ENCODE measurements at regions of chr1 and their contacts with region 1.

Region 1: DNA sequence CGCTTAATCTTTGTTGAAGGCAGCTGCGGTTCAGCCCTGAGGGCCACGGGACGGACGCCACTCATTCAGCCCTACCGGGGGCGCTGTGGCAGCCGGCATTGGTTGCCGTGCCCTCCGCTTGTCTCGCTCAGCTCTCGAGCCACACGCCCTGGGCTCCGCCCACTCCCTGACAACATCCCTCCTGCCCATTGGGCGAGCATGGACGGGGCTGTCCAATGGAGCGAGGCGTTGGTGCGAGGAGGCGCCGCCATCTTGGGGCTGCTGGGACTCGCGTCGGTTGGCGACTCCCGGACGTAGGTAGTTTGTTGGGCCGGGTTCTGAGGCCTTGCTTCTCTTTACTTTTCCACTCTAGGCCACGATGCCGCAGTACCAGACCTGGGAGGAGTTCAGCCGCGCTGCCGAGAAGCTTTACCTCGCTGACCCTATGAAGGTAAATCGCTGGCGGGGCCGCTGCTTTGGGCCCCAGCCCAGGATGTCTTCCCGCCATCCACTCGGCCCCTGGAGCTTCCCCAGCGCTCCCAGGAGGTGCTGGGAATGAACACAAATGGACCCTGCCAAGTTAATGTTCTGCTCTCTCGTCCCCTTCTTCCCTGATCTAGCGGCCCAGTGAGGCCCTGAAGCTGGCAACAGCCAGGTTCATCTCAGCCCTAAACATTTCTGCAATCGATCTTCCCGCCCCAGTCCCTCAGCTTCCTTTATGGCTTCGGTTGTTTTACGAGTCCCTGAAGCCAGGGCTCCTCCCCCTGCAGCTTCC is at the start of gene SRP9:
- DNase-seq: peak; percentile 99
- H3K4me3 ChIP-seq: peak within 1 kb of the TSS; percentile 68 to 94
- H3K4me3 Mint-ChIP-seq: no peak within 1 kb of the TSS
- H3K27ac ChIP-seq: peak within 1 kb of the TSS; percentile 94
- H3K27ac Mint-ChIP-seq: no peak within 1 kb of the TSS
- H3K4me1 ChIP-seq: peaks cover 57% of the 10 kb centered on the region
- H3K4me1 Mint-ChIP-seq: peaks cover 0 to 32% (median 27%) of the 10 kb centered on the region in 4 donors
- H3K27me3 ChIP-seq: no peaks in the 10 kb centered on the region
- H3K27me3 Mint-ChIP-seq: no peaks in the 10 kb centered on the region
- total RNA-seq, gene SRP9: 141 to 151 TPM

Region 2: DNA sequence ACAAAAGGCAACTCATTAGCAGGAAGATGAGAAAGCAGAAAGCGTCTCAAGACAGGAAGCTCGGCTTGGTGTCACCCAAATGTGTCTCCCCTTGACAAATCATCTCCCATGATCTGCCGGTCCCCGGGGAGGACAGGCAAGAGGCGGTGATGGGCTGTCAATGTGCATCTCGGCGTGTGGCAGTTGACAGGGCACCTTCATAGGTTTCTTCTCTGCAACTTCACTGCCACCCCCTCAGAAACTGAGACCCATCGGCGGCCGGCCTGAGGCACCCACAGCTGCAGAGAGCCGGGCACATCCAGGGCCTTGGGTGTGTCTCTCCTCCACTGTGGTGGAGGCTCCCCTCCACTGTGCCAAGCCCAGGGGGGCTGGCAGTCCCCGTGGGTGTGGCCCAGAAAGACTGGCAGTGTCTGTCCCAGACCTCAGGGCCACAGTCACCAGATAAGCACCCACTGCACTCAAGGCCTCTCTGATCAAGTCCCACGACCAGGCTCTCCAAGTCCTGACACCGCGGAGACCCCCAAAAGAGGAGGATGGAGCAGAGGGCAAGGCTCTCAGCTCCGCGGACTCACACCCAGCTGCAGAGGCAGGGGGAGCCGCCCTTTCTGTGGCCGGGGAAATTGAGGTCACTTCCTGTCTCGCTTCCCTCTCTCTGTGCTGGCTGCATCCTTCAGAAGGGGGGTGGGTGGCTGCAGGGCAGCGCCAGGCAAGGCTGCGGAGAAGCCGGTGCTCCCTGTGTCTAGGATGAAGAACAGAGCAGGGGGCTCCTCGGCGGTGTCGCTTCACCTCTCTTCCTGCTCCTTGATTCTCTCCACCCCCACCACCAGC is 310.4 kb before region 1 on chr1:
- CTCF ChIA-PET with region 1: interaction called, 5 read pairs
- POLR2A ChIA-PET with region 1: interaction called, 24 read pairs
- intact Hi-C with region 1: no loop called
- DNase-seq: peak; percentile 83 to 89 (median 85)
- H3K4me3 ChIP-seq: peak overlapping the region; percentile 74 to 85
- H3K4me3 Mint-ChIP-seq: peak overlapping the region; percentile 90 to 94 (median 92)
- H3K27ac ChIP-seq: peak overlapping the region; percentile 84
- H3K27ac Mint-ChIP-seq: peak overlapping the region; percentile 92 to 98 (median 97)
- H3K4me1 ChIP-seq: peaks cover 48% of the 10 kb centered on the region
- H3K4me1 Mint-ChIP-seq: peaks cover 27 to 63% (median 45%) of the 10 kb centered on the region in 4 donors
- H3K27me3 ChIP-seq: no peaks in the 10 kb centered on the region
- H3K27me3 Mint-ChIP-seq: no peaks in the 10 kb centered on the region

Region 3: DNA sequence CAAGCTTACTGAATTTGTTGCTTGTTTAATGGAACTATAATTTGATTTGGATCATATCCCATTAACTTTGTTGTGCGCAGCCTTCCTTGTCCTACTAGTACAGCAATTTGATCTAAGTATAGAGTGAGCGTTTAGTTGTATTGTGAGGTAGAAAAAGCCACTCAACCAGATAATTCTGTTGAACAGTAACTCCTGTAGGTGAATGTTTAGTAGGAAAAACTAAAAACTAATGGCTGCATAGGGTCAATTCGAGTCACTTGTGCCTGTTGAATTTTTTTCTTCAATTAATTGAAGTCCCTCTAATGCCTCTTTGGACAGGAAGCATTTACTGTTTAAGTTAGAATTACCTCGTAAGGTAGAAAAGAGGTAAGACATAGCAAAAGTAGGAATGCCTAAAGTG is 17.2 kb after region 1 on chr1:
- CTCF ChIA-PET with region 1: interaction called, 3 read pairs
- POLR2A ChIA-PET with region 1: interaction called, 28 read pairs
- intact Hi-C with region 1: no loop called
- DNase-seq: no peak
- H3K4me3 ChIP-seq: no peak overlapping the region
- H3K4me3 Mint-ChIP-seq: no peak overlapping the region
- H3K27ac ChIP-seq: no peak overlapping the region
- H3K27ac Mint-ChIP-seq: no peak overlapping the region
- H3K4me1 ChIP-seq: no peaks in the 10 kb centered on the region
- H3K4me1 Mint-ChIP-seq: peaks cover 0 to 7% (median 2%) of the 10 kb centered on the region in 4 donors
- H3K27me3 ChIP-seq: no peaks in the 10 kb centered on the region
- H3K27me3 Mint-ChIP-seq: no peaks in the 10 kb centered on the region

Region 4: DNA sequence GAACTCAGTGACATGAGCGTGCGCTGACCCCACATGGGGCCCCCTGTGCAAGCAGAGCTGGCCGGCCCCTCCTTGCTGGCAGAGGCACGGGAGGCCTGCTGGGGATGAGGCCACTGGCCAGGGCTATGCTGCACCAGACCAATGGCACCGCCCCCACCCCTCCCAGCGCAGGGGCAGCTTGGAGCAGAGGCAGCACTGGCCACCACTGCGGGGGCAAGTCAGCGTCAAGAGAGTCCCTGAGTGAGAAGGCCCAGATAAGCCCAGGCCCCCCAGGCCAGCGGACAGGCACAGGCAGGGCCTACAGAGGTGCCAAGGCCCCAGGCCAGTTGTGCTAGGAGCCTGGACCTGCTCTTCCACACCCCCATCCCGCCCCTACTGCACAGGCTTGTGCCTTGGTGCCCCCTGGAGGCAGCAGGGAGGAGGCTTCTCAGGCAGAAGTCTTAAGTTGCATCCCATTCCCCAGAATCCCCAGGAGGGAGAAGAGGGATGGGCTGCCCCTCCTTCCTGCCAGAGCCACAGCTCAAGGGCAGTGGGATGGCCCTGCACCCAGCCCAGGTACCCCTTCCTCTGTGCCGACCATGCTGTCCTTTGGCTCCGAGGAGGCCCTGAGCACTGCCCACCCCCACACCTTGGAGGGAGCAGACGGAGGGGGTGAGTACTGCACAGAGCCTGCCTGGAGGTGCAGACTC is 68.0 kb after region 1 on chr1:
- CTCF ChIA-PET with region 1: interaction called, 5 read pairs
- POLR2A ChIA-PET with region 1: interaction called, 17 read pairs
- intact Hi-C with region 1: loop called (anchors 5 kb)
- DNase-seq: peak in 3 of 5 donors; percentile 33 to 40 (median 33)
- H3K4me3 ChIP-seq: no peak overlapping the region
- H3K4me3 Mint-ChIP-seq: peak overlapping the region in 1 of 8 donors; percentile 36
- H3K27ac ChIP-seq: no peak overlapping the region
- H3K27ac Mint-ChIP-seq: no peak overlapping the region
- H3K4me1 ChIP-seq: peaks cover 41% of the 10 kb centered on the region
- H3K4me1 Mint-ChIP-seq: peaks cover 25 to 57% (median 38%) of the 10 kb centered on the region in 4 donors
- H3K27me3 ChIP-seq: no peaks in the 10 kb centered on the region
- H3K27me3 Mint-ChIP-seq: no peaks in the 10 kb centered on the region

Region 5: GRCh38 chr1:225881969-225882693 is 104.4 kb after region 1 on chr1 and contains the start of gene TMEM63A:
- CTCF ChIA-PET with region 1: interaction called, 19 read pairs
- POLR2A ChIA-PET with region 1: interaction called, 78 read pairs
- intact Hi-C with region 1: loop called (anchors 1 kb)
- DNase-seq: peak; percentile 86 to 92 (median 88)
- H3K4me3 ChIP-seq: peak within 1 kb of the TSS; percentile 89 to 98
- H3K4me3 Mint-ChIP-seq: peak within 1 kb of the TSS; percentile 95 to 99 (median 98)
- H3K27ac ChIP-seq: peak within 1 kb of the TSS; percentile 84
- H3K27ac Mint-ChIP-seq: peak within 1 kb of the TSS; percentile 93 to 97 (median 96)
- H3K4me1 ChIP-seq: peaks cover 48% of the 10 kb centered on the region
- H3K4me1 Mint-ChIP-seq: peaks cover 37 to 57% (median 46%) of the 10 kb centered on the region in 4 donors
- H3K27me3 ChIP-seq: no peaks in the 10 kb centered on the region
- H3K27me3 Mint-ChIP-seq: no peaks in the 10 kb centered on the region
- total RNA-seq, gene TMEM63A: 476 to 507 TPM

Region 6: DNA sequence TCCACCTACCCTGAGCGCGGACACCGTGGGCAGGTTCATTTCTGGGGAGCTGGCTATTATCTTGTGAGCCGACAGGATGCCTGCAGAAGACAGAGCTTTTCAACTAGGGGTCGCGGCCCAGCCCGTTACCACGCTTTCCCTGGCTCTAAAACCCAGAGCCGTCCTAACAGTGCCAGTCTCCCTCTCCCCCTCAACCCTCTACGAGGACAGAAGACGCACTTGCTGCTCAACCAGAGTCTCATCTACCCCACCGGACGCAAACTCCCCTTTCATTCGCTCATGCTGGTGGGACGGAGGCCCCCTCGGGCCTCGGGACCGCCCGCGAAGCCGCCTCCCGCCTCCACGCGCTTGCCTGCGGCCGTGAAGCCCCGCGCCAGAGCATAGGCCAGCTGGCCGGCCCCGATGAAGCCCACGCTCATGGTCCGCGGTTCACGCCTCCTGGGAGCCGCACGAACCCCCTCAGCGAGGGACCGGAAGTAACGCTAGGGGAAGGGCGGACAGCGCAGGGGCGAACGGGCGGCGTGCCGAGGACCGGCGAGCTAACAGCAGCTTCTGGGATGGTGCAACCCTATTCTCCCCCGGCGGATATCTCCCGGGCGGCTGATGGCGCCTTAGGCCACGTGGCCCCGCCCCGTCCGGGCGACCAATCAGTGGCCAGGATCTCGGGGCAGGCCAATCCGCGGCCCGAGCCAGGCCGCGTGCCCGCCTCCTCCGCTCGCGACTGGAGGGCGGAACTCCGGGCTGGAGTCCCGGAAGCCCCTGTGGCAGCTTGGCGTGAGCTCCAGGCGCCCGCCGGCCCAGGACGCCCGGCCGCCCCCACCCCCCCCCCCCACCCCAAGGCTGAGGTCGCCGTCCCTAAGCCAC is 146.2 kb after region 1 on chr1 and contains the start of gene PYCR2:
- CTCF ChIA-PET with region 1: interaction called, 9 read pairs
- POLR2A ChIA-PET with region 1: interaction called, 64 read pairs
- intact Hi-C with region 1: loop called (anchors 1 kb)
- DNase-seq: peak; percentile 93 to 96 (median 95)
- H3K4me3 ChIP-seq: peak within 1 kb of the TSS; percentile 94 to 96
- H3K4me3 Mint-ChIP-seq: peak within 1 kb of the TSS; percentile 90 to 97 (median 94)
- H3K27ac ChIP-seq: peak within 1 kb of the TSS; percentile 85
- H3K27ac Mint-ChIP-seq: peak within 1 kb of the TSS; percentile 90 to 97 (median 95)
- H3K4me1 ChIP-seq: peaks cover 68% of the 10 kb centered on the region
- H3K4me1 Mint-ChIP-seq: peaks cover 13 to 52% (median 28%) of the 10 kb centered on the region in 4 donors
- H3K27me3 ChIP-seq: no peaks in the 10 kb centered on the region
- H3K27me3 Mint-ChIP-seq: no peaks in the 10 kb centered on the region
- total RNA-seq, gene PYCR2: 102 to 116 TPM

Region 7: GRCh38 chr1:226062558-226063223 is 284.9 kb after region 1 on chr1 and contains the start of gene H3-3A:
- CTCF ChIA-PET with region 1: interaction called, 4 read pairs
- POLR2A ChIA-PET with region 1: interaction called, 27 read pairs
- intact Hi-C with region 1: loop called (anchors 2 kb)
- DNase-seq: peak; percentile 98
- H3K4me3 ChIP-seq: peak within 1 kb of the TSS; percentile 77 to 84
- H3K4me3 Mint-ChIP-seq: peak within 1 kb of the TSS; percentile 99 to 100 (median 100)
- H3K27ac ChIP-seq: peak within 1 kb of the TSS; percentile 89
- H3K27ac Mint-ChIP-seq: peak within 1 kb of the TSS; percentile 96 to 100 (median 99)
- H3K4me1 ChIP-seq: peaks cover 47% of the 10 kb centered on the region
- H3K4me1 Mint-ChIP-seq: peaks cover 31 to 63% (median 43%) of the 10 kb centered on the region in 4 donors
- H3K27me3 ChIP-seq: no peaks in the 10 kb centered on the region
- H3K27me3 Mint-ChIP-seq: peaks cover 0 to 2% of the 10 kb centered on the region in 2 donors
- total RNA-seq, gene H3-3A: 391 to 397 TPM